ENCODE measurements at regions of chr22 and their contacts with region 1.

Region 1: DNA sequence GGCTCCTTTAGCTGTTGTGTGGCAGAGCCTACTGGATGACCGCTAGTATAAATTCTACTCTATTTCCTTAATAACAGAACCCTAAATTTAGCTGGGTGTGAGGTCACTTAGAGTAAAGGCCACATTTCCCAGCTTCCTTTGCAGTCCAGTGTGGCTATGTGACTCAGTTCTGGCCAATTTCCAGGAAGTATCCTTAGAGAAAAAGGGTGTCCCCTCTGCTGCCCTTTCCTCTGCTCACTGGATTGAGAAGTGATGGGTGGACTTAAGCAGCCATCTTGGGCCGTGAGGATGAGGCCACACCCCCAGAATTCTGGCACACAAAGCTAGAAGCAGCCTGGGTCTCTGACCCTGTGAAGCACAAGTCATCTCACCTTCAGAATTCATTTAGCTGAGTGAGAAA is 11.7 kb upstream of the RASD2 start:
- DNase-seq: no peak
- ATAC-seq: no peak
- H3K4me3 ChIP-seq: no peak overlapping the region
- H3K27ac ChIP-seq: no peak overlapping the region
- H3K4me1 ChIP-seq: no peaks in the 10 kb centered on the region
- CTCF ChIP-seq: no peak
- EP300 ChIP-seq: no peak
- POLR2A ChIP-seq: no peak
- RAD21 ChIP-seq: no peak

Region 2: DNA sequence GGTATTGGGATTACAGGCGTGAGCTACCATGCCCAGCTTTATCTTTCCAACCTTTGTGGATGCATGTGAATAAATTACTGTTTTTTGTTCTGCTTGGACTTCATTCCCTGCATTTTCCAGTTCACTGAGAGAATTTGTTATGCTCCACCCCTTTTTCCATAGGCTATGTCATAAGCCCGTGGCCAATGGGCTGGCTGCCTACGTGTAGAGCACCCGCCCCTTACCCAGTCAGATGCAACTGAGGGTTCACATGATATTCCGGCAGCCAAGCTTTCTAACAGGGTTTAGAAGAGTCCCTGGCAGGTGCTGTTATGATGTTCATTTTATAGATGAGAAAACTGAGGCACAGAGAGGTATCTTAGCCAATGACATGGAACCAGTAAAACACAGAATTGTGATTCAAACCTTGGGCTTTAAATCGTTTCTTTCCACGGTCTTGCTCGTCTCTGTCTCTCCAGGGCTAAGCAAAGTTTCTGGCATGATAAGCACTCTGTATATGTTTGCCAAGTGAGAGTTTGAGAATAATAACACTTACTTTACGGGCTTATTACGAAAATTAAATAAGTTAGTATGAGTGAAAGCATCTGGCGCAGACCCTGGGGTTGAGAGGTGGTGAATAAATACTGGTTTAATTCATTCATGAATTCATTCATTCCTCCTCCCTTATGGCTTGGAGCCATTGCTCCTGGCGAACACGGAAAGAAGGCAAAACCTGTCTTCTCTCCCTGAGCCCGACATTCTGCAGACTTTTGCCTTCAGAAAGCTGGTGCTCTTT is 30.7 kb before region 1 on chr22:
- CTCF ChIA-PET with region 1: no interaction called
- POLR2A ChIA-PET with region 1: no interaction called
- DNase-seq: no peak
- ATAC-seq: peak in 1 of 2 experiments; percentile 66; a peak in 3 of 6 replicates
- H3K4me3 ChIP-seq: no peak overlapping the region
- H3K27ac ChIP-seq: no peak overlapping the region
- H3K4me1 ChIP-seq: no peaks in the 10 kb centered on the region
- CTCF ChIP-seq: no peak
- EP300 ChIP-seq: no peak
- POLR2A ChIP-seq: no peak
- RAD21 ChIP-seq: no peak

Region 3: GRCh38 chr22:35510481-35510934 is 18.4 kb before region 1 on chr22:
- CTCF ChIA-PET with region 1: no interaction called
- POLR2A ChIA-PET with region 1: no interaction called
- DNase-seq: no peak
- ATAC-seq: no peak
- H3K4me3 ChIP-seq: no peak overlapping the region
- H3K27ac ChIP-seq: no peak overlapping the region
- H3K4me1 ChIP-seq: no peaks in the 10 kb centered on the region
- CTCF ChIP-seq: no peak
- EP300 ChIP-seq: no peak
- POLR2A ChIP-seq: no peak
- RAD21 ChIP-seq: no peak

Region 4: DNA sequence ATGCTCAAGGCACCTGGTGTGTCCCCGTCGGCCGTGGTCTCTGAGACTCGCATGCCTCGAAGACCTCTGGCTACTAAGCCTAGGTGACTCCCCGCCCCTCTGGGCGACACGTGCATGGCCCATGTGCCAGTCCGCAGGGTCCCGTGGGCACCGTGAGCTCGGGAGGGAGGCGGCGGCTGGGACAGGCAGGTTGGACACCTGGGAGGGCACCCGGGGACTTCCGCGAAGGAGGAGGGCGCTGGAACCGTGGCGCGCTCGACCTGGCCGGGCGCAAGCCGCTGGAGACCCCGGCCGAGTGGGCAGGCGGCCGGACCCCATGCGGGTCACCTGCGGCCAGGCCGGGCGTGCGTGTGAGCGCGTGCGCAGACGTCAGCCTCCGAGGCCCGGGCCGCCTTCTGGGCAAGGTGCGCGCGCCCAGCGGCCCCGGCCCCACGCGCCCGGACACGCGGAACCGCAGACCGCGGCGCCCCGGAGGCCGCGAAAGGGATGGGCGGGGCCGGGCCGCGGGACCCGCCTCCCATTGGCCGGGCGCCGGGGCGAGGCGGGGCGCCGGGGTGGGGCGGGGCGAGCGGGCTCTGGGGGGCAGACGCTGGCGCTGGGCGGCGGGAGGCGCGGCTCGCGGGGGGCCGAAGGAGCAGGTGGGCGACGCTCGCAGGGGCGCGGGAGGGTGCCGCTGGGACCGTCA is 11.1 kb after region 1 on chr22:
- CTCF ChIA-PET with region 1: interaction called, 10 read pairs
- POLR2A ChIA-PET with region 1: no interaction called
- DNase-seq: peak in 1 of 2 experiments; percentile 44
- ATAC-seq: peak; percentile 69 to 76
- H3K4me3 ChIP-seq: peak overlapping the region; percentile 65
- H3K27ac ChIP-seq: peak overlapping the region; percentile 83 to 92
- H3K4me1 ChIP-seq: peaks cover 19% of the 10 kb centered on the region
- CTCF ChIP-seq: no peak
- EP300 ChIP-seq: no peak
- POLR2A ChIP-seq: peak; percentile 36; the same call in 1 of the 2 replicates
- RAD21 ChIP-seq: no peak